HCT116 (cell line): ENCODE measurements at regions of chr13 and their contacts with region 1.

Region 1: DNA sequence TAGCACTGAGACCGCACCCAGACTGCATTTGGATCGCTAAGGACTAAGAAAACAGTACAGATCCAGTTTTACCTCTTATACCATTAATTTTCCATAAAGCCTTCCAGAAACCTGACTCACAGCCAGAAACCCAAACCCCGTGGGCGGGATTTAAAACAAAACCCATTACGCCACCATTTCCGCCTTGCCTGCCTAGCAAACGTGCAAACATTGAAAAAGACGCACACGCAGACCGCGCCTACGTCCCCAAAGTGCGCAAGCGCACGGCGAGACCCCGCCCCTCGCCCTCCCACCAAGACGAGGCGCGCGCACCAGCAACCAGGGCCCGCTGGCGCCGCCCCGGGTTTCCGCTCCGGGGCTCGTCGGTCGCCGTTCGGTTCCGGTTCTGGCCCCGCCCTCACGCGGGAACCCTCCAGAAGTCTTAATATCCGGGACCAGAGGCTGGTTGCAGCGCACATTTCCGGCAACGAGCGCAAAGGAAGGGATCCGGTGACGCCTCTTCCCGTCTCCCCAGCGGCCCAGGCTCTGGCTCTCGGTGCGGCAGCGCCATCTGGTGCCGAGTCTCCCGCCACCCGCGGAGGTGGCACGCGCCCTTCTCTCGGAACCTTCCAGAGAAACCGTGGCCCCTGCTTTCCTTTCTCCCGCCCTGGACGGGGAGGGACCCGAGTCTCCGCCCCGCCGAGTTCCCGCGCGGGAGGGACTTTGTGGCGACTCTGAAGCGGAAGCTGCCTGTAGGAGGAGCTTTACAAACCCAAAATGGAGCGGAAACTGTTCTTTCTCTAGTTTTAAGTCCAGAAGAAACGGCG is 256.9 kb upstream of the STARD13 start:
- DNase-seq: peak; percentile 97
- ATAC-seq: peak; percentile 91
- H3K4me3 ChIP-seq: peak overlapping the region; percentile 56 to 61
- H3K27ac ChIP-seq: peak overlapping the region; percentile 98
- H3K4me1 ChIP-seq: peaks cover 19 to 26% of the 10 kb centered on the region in 2 experiments
- H3K27me3 ChIP-seq: no peaks in the 10 kb centered on the region
- CTCF ChIP-seq: peak; percentile 68 to 79 (median 78)
- POLR2A ChIP-seq: peak; percentile 41
- RAD21 ChIP-seq: peak; percentile 93

Region 2: DNA sequence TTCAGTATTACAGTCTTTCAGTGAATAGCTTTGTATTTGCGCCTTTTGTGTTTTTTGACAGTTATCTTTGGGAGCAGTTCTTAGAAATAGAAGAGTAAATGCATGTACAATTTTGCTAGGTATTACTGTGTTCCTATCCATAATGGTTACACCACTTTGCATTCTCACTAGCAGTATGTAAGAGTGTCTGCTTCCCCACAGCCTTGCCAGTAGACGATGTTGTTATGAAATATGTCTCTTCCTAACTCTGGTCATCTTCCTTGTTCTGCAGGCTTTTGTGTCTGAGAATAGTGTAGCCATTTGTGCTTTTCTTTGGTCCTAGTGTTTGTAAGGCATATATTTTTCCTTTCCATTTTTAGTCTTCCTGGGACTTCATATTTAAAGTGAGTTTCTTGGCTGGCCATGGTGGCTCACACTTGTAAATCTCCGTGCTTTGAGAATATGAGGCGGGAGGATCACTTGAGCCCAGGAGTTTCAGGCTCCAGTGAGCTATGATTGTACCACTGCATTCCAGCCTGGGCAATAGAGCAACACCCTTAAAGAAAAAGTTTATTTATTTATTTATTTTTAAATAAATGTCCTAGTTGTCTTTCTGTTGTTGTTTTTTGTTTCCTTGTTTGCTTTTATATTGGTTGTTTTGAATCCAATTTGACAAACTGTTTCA is 816.0 kb before region 1 on chr13:
- CTCF ChIA-PET with region 1: no interaction called
- POLR2A ChIA-PET with region 1: no interaction called
- RAD21 ChIA-PET with region 1: no interaction called
- intact Hi-C with region 1: loop called (anchors 5 kb)
- DNase-seq: no peak
- ATAC-seq: no peak
- H3K4me3 ChIP-seq: no peak overlapping the region
- H3K27ac ChIP-seq: no peak overlapping the region
- H3K4me1 ChIP-seq: peaks cover 0 to 6% of the 10 kb centered on the region in 2 experiments; a peak in 2 of 4 replicates
- H3K27me3 ChIP-seq: no peaks in the 10 kb centered on the region
- CTCF ChIP-seq: no peak
- POLR2A ChIP-seq: no peak
- RAD21 ChIP-seq: no peak

Region 3: GRCh38 chr13:33228648-33229445 is 313.6 kb before region 1 on chr13:
- CTCF ChIA-PET with region 1: interaction called, 5 read pairs
- POLR2A ChIA-PET with region 1: no interaction called
- RAD21 ChIA-PET with region 1: interaction called in 1 of 2 experiments, 3 read pairs
- intact Hi-C with region 1: loop called (anchors 1 kb)
- DNase-seq: peak; percentile 26
- ATAC-seq: peak; percentile 79
- H3K4me3 ChIP-seq: no peak overlapping the region
- H3K27ac ChIP-seq: no peak overlapping the region
- H3K4me1 ChIP-seq: no peaks in the 10 kb centered on the region
- H3K27me3 ChIP-seq: no peaks in the 10 kb centered on the region
- CTCF ChIP-seq: peak; percentile 63 to 94 (median 86); a peak in 5 of 6 replicates
- POLR2A ChIP-seq: no peak
- RAD21 ChIP-seq: peak; percentile 83

Region 4: DNA sequence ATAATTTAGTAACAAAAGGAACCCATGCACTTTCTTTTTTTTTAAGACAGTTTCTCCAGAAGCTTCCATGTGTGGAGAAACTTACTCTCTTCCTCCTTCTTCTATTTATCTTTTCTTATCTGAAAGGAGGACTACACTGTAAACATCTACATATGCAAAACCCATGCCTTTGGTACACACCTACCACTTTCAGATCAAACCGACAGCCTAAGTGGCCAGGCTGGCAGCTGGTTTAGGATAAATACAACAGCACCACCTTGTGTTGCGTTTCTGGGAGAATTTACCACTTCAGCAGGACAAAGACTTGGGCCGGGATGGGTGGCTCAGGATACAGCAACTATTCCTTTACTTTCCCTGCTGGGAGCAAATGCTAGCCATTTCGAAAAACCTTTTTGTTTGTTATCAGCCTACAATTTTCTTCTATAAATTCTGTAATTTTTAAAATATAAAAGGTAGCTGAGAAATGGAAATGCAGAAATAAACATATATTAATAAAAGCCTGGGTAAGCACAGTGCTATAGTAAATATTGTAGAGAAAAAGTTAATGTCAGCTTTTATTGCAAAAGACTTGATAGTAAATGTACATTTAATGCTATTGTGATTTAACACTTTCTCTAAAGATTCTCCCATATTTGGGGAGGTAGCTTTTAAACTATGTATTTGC is 181.4 kb after region 1 on chr13:
- CTCF ChIA-PET with region 1: interaction called, 4 read pairs
- POLR2A ChIA-PET with region 1: no interaction called
- RAD21 ChIA-PET with region 1: no interaction called
- intact Hi-C with region 1: loop called (anchors 2 kb)
- DNase-seq: peak; percentile 77
- ATAC-seq: peak; percentile 99
- H3K4me3 ChIP-seq: no peak overlapping the region
- H3K27ac ChIP-seq: no peak overlapping the region
- H3K4me1 ChIP-seq: no peaks in the 10 kb centered on the region; a peak in 1 of 4 replicates
- H3K27me3 ChIP-seq: no peaks in the 10 kb centered on the region
- CTCF ChIP-seq: peak; percentile 59 to 74 (median 65); a peak in 5 of 6 replicates
- POLR2A ChIP-seq: no peak
- RAD21 ChIP-seq: peak; percentile 86

Region 5: DNA sequence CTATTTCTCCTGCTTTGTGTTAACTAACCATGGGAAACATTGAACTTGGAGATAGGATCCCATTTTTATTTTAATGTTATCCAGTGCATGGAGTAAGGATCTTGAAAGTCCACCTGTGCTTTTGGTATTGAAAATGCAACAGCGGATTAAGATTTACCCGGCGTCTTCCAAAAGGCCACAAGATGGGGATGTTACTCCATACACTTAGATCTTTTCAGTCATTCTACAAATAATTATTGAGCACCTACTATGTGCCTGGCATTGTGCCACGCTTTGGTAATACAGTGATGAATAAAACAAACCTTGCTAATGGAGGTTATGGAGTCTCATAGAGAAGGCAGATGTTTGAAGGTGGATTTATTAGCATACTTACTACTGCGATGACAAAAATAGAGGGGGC is 332.4 kb after region 1 on chr13:
- CTCF ChIA-PET with region 1: no interaction called
- POLR2A ChIA-PET with region 1: no interaction called
- RAD21 ChIA-PET with region 1: no interaction called
- intact Hi-C with region 1: no loop called
- DNase-seq: no peak
- ATAC-seq: no peak
- H3K4me3 ChIP-seq: no peak overlapping the region
- H3K27ac ChIP-seq: no peak overlapping the region
- H3K4me1 ChIP-seq: no peaks in the 10 kb centered on the region
- H3K27me3 ChIP-seq: no peaks in the 10 kb centered on the region
- CTCF ChIP-seq: peak in 1 of 3 experiments; percentile 36; a peak in 3 of 6 replicates
- POLR2A ChIP-seq: no peak
- RAD21 ChIP-seq: peak; percentile 14; the same call in 1 of the 2 replicates

Region 6: DNA sequence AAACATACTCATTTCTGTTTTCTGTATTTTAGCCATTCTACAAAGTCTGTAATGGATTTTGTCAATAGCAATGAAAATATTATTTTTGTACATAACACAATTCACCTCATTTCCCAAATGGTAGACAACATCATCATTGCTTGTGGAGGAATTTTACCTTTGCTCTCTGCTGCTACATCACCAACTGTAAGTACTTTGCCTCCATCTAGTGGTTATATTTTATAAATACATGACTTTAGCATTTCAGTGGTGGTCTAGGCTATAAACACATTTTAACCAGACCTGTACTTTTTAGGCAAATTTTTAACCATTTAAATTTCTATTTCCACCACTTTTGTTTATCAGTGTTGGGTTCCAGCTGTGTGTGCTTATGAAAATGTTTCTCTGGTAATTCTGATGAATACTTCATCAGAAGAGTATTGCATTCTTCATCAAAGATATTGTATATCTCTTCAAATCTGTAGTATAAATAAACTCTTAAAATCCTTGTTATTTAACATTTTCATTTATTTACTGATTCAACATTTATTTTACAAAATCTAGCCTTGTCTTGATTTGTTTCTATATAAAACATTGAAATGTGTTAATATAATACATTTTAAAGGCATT is 1621.9 kb after region 1 on chr13:
- CTCF ChIA-PET with region 1: no interaction called
- POLR2A ChIA-PET with region 1: no interaction called
- RAD21 ChIA-PET with region 1: no interaction called
- intact Hi-C with region 1: loop called (anchors 10 kb)
- DNase-seq: peak; percentile 15
- ATAC-seq: peak; percentile 75
- H3K4me3 ChIP-seq: no peak overlapping the region
- H3K27ac ChIP-seq: no peak overlapping the region
- H3K4me1 ChIP-seq: no peaks in the 10 kb centered on the region
- H3K27me3 ChIP-seq: no peaks in the 10 kb centered on the region
- CTCF ChIP-seq: peak; percentile 31 to 71 (median 45); a peak in 4 of 6 replicates
- POLR2A ChIP-seq: no peak
- RAD21 ChIP-seq: peak; percentile 74